ENCODE measurements at regions of chr11 and their contacts with region 1.

Region 1: DNA sequence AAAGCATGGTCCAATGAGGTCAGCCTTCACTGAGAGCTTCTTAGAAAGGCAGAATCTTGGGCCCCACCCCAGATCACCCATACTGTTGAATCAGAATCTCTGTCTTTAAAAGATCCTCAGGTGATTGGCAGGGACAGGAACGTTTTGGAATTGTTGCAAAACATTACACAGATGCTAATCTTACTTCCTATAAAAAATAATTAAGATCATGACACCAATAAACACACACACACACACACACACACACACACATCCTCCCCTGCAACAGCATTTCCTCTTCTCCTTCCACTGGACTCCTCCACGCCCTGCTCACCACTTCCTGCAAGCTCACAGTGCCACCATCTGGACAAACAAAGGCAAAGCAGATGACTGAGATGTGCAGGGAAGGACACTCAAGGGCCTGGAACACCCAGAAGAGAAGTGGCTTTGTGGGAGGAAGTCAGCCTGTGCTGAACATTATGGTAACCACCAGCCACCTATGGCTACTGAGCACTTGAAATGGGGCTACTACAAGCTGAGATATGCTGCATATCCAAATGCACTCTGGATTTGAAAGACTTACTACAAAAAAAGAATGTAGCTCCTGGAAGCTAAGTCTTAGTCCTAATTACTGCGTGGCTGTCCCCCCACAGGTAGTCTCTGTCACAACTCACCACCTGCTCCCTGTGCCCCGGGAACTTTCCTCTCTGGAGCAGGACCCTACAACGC is 65.6 kb downstream of the BTG4 start:
- DNase-seq: peak; percentile 63 to 81
- H3K4me3 ChIP-seq: no peak overlapping the region
- H3K27ac ChIP-seq: no peak overlapping the region
- H3K4me1 ChIP-seq: no peaks in the 10 kb centered on the region
- H3K27me3 ChIP-seq: no peaks in the 10 kb centered on the region
- CTCF ChIP-seq: peak; percentile 91

Region 2: GRCh38 chr11:110447897-110448745 is 998.4 kb before region 1 on chr11:
- CTCF ChIA-PET with region 1: interaction called, 10 read pairs
- POLR2A ChIA-PET with region 1: no interaction called
- intact Hi-C with region 1: loop called (anchors 5 kb)
- DNase-seq: no peak
- H3K4me3 ChIP-seq: no peak overlapping the region
- H3K27ac ChIP-seq: no peak overlapping the region
- H3K4me1 ChIP-seq: no peaks in the 10 kb centered on the region
- H3K27me3 ChIP-seq: no peaks in the 10 kb centered on the region
- CTCF ChIP-seq: peak; percentile 89

Region 3: DNA sequence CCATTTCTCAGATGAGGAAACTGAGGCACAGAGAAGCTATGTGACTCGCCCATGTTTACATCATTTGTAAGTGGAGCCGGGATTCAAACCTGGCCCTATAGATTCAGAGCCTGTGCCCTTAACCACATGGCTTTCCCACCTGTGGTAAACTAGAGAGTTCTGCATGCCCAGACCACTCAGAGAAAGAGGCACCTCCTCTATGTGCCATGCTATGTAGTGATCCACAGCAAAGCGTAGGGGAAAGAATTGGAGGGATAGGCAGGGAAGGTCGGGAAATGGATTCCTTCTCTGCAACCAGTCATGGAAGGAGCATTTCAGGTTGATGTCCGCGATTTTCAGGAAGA is 216.5 kb before region 1 on chr11:
- CTCF ChIA-PET with region 1: no interaction called
- POLR2A ChIA-PET with region 1: no interaction called
- intact Hi-C with region 1: loop called (anchors 1 kb)
- DNase-seq: no peak
- H3K4me3 ChIP-seq: no peak overlapping the region; the same call in 1 of the 2 replicates
- H3K27ac ChIP-seq: no peak overlapping the region
- H3K4me1 ChIP-seq: peaks cover 5% of the 10 kb centered on the region
- H3K27me3 ChIP-seq: no peaks in the 10 kb centered on the region
- CTCF ChIP-seq: no peak

Region 4: DNA sequence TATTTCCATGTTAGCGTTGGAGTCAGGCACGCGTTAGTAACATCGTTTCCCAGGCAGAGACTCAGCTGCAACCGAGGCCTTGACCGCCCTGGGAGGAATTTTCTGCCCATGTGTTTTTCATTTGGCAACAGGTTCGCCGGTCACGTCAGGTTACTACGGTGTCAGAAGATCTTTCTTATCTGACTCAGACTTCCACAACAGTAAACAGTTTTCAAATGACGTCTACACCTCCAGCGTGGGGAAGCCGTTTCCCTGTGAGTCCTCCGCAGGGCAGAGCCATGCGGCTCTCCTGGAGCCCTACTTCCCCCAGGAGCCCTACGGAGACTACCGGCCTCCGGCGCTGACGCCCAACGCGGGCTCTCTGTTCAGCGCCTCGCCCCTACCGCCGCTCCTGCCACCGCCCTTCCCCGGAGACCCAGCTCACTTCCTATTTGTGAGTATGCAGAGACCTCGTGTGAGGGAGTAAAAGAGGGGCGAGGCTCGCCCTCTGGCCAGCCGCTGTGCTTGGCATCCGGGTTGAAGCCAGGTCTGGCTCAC is 162.5 kb before region 1 on chr11:
- CTCF ChIA-PET with region 1: interaction called, 16 read pairs
- POLR2A ChIA-PET with region 1: no interaction called
- intact Hi-C with region 1: loop called (anchors 1 kb)
- DNase-seq: no peak
- H3K4me3 ChIP-seq: no peak overlapping the region
- H3K27ac ChIP-seq: no peak overlapping the region
- H3K4me1 ChIP-seq: no peaks in the 10 kb centered on the region
- H3K27me3 ChIP-seq: no peaks in the 10 kb centered on the region
- CTCF ChIP-seq: no peak

Region 5: DNA sequence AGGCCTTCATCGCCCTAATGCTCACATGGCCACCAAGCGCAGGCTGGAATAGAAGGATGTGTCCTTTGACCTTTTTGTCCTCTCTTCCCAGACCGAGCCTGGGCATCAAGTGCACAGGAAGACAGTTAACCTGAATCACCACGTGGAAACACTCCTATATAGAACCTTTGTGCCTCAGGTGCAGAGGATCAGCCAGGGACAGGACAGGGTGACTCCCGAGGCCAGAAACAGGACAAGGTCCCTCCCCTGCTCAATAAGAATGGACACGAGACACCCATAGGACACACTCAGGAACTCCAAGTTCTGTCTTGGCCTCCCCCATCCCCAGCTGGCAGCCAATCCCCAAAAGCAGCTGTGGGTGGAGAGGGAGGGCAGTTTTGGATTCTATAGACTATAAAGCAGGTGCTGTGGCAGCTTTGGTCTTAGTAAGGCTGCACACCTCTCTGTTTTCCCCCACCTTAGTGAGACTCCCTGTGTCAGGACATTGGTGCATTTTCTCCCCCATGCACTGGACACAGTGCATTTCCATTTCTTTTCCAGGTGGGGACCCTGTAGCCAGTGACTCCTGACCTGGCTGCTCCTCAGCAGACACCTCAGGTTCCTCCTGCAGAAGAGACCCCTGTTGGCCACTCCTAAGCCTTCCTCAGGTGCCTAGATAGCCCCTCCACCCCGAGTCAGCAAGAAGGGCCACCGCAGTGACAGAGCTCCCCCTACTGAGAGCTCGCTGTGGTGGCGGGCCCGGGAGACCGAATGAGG is 23.9 kb before region 1 on chr11:
- CTCF ChIA-PET with region 1: no interaction called
- POLR2A ChIA-PET with region 1: no interaction called
- intact Hi-C with region 1: loop called (anchors 1 kb)
- DNase-seq: peak; percentile 57 to 63
- H3K4me3 ChIP-seq: no peak overlapping the region
- H3K27ac ChIP-seq: no peak overlapping the region
- H3K4me1 ChIP-seq: no peaks in the 10 kb centered on the region
- H3K27me3 ChIP-seq: no peaks in the 10 kb centered on the region
- CTCF ChIP-seq: peak; percentile 95

Region 6: DNA sequence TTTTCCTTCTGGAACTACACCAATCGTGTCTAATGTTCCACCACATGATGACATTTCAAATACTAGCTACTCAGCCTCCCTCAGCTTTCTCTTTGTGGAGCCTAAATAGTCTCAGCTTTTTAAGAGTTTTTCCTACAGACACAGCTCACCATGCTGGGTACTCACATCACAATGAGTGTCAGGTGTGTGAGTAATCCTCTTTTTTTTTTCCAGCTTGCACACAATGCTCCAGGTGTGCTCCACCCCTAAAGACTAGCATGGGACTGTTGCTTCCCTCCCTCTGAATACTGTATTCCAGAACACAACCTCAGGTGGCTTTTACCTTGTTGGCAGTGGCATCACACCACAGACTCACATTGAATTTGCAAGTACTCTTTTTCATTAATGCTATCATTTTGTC is 53.9 kb after region 1 on chr11:
- CTCF ChIA-PET with region 1: no interaction called
- POLR2A ChIA-PET with region 1: no interaction called
- intact Hi-C with region 1: no loop called
- DNase-seq: no peak
- H3K4me3 ChIP-seq: no peak overlapping the region
- H3K27ac ChIP-seq: no peak overlapping the region
- H3K4me1 ChIP-seq: no peaks in the 10 kb centered on the region
- H3K27me3 ChIP-seq: no peaks in the 10 kb centered on the region
- CTCF ChIP-seq: no peak